CD4-positive, alpha-beta T cell (primary cell): ENCODE measurements at regions of chr16 and their contacts with region 1.

Region 1: DNA sequence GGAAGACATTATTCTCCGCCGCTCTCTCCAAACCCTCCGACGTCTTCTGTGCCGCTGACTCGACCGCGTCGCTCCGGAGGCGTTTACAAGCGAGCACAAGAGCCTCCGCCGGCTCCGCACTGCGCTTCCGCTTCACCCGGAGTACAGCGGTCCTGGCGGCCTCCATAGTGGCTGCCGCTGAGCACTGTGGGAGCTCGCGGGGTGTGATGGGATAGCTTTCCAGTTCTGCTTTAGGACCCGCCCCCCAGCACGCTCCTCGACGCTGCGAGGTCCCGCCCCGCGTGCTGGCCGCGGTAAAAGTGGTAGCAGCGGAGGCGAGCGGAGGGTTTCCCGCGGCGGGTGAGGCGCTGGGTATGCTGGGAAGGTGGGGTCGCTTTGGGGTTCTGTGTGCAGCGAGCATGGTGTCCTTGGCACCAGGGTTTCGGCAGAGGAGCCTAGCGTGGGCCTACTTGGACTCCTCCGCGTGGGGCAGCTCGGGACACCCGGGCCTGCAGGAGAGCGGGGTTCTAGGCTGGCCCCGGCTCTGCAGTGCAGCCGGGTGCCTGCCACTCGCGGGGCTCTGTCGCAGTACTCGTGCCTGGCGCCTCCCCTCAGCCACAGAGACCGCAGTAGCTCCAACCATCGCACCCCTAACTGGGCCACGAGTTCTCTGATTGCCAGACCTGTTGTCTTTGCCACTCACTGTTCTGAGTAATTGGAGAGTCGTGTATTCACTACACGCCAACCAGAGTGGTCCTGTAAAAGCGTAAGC is at the starts of genes PRMT7 and SLC7A6OS:
- DNase-seq: peak; percentile 82 to 97 (median 90)
- ATAC-seq: peak; percentile 98
- H3K4me3 ChIP-seq: peak within 1 kb of the TSS; percentile 100
- H3K4me3 Mint-ChIP-seq: peak within 1 kb of the TSS; percentile 100
- H3K27ac ChIP-seq: peak within 1 kb of the TSS; percentile 73 to 79
- H3K27ac Mint-ChIP-seq: peak within 1 kb of the TSS; percentile 91
- H3K4me1 ChIP-seq: peaks cover 49% of the 10 kb centered on the region
- H3K4me1 Mint-ChIP-seq: peaks cover 62% of the 10 kb centered on the region
- H3K27me3 ChIP-seq: no peaks in the 10 kb centered on the region
- H3K27me3 Mint-ChIP-seq: no peaks in the 10 kb centered on the region
- CTCF ChIP-seq: peak; percentile 14
- total RNA-seq, gene PRMT7: 46.3 to 51.0 TPM
- total RNA-seq, gene SLC7A6OS: 29.0 to 32.1 TPM

Region 2: GRCh38 chr16:68244903-68245853 is 65.8 kb before region 1 on chr16 and contains the start of gene PLA2G15:
- CTCF ChIA-PET with region 1: no interaction called
- POLR2A ChIA-PET with region 1: interaction called, 11 read pairs
- intact Hi-C with region 1: no loop called
- DNase-seq: peak; percentile 94 to 99 (median 96)
- ATAC-seq: peak; percentile 99
- H3K4me3 ChIP-seq: peak within 1 kb of the TSS; percentile 94
- H3K4me3 Mint-ChIP-seq: peak within 1 kb of the TSS; percentile 99
- H3K27ac ChIP-seq: peak within 1 kb of the TSS in 1 of 2 donors; percentile 21
- H3K27ac Mint-ChIP-seq: peak within 1 kb of the TSS; percentile 50
- H3K4me1 ChIP-seq: peaks cover 29% of the 10 kb centered on the region
- H3K4me1 Mint-ChIP-seq: peaks cover 17% of the 10 kb centered on the region
- H3K27me3 ChIP-seq: no peaks in the 10 kb centered on the region
- H3K27me3 Mint-ChIP-seq: no peaks in the 10 kb centered on the region
- CTCF ChIP-seq: no peak
- total RNA-seq, gene PLA2G15: 4.3 to 4.7 TPM

Region 3: GRCh38 chr16:68264128-68265077 is 46.5 kb before region 1 on chr16 and contains the start of gene SLC7A6:
- CTCF ChIA-PET with region 1: interaction called, 39 read pairs
- POLR2A ChIA-PET with region 1: interaction called, 90 read pairs
- intact Hi-C with region 1: loop called (anchors 1 kb)
- DNase-seq: peak; percentile 59 to 94 (median 76)
- ATAC-seq: peak; percentile 69
- H3K4me3 ChIP-seq: peak within 1 kb of the TSS; percentile 74
- H3K4me3 Mint-ChIP-seq: peak within 1 kb of the TSS; percentile 98
- H3K27ac ChIP-seq: peak within 1 kb of the TSS; percentile 96 to 99
- H3K27ac Mint-ChIP-seq: peak within 1 kb of the TSS; percentile 94
- H3K4me1 ChIP-seq: peaks cover 62% of the 10 kb centered on the region
- H3K4me1 Mint-ChIP-seq: peaks cover 62% of the 10 kb centered on the region
- H3K27me3 ChIP-seq: no peaks in the 10 kb centered on the region
- H3K27me3 Mint-ChIP-seq: no peaks in the 10 kb centered on the region
- CTCF ChIP-seq: peak; percentile 63
- total RNA-seq, gene SLC7A6: 187 to 197 TPM

Region 4: GRCh38 chr16:68275611-68276191 is 35.2 kb before region 1 on chr16:
- CTCF ChIA-PET with region 1: interaction called, 5 read pairs
- POLR2A ChIA-PET with region 1: interaction called, 50 read pairs
- intact Hi-C with region 1: loop called in 1 of 2 experiments (anchors 1 kb)
- DNase-seq: peak in 13 of 14 experiments; percentile 36 to 87 (median 55)
- ATAC-seq: peak; percentile 75
- H3K4me3 ChIP-seq: peak overlapping the region; percentile 5
- H3K4me3 Mint-ChIP-seq: peak overlapping the region; percentile 66
- H3K27ac ChIP-seq: peak overlapping the region; percentile 71 to 74
- H3K27ac Mint-ChIP-seq: peak overlapping the region; percentile 94
- H3K4me1 ChIP-seq: peaks cover 93% of the 10 kb centered on the region
- H3K4me1 Mint-ChIP-seq: peaks cover 73% of the 10 kb centered on the region
- H3K27me3 ChIP-seq: no peaks in the 10 kb centered on the region
- H3K27me3 Mint-ChIP-seq: no peaks in the 10 kb centered on the region
- CTCF ChIP-seq: no peak

Region 5: GRCh38 chr16:68289621-68290329 is 21.2 kb before region 1 on chr16:
- CTCF ChIA-PET with region 1: interaction called, 4 read pairs
- POLR2A ChIA-PET with region 1: interaction called, 52 read pairs
- intact Hi-C with region 1: loop called in 1 of 2 experiments (anchors 2 kb)
- DNase-seq: peak in 10 of 14 experiments; percentile 27 to 68 (median 40)
- ATAC-seq: peak; percentile 38
- H3K4me3 ChIP-seq: no peak overlapping the region
- H3K4me3 Mint-ChIP-seq: peak overlapping the region; percentile 70
- H3K27ac ChIP-seq: peak overlapping the region; percentile 74 to 83
- H3K27ac Mint-ChIP-seq: peak overlapping the region; percentile 87
- H3K4me1 ChIP-seq: peaks cover 93% of the 10 kb centered on the region
- H3K4me1 Mint-ChIP-seq: peaks cover 87% of the 10 kb centered on the region
- H3K27me3 ChIP-seq: no peaks in the 10 kb centered on the region
- H3K27me3 Mint-ChIP-seq: no peaks in the 10 kb centered on the region
- CTCF ChIP-seq: no peak

Region 6: GRCh38 chr16:68298907-68299561 is 11.9 kb before region 1 on chr16:
- CTCF ChIA-PET with region 1: interaction called, 4 read pairs
- POLR2A ChIA-PET with region 1: interaction called, 17 read pairs
- intact Hi-C with region 1: no loop called
- DNase-seq: no peak
- ATAC-seq: no peak
- H3K4me3 ChIP-seq: no peak overlapping the region
- H3K4me3 Mint-ChIP-seq: peak overlapping the region; percentile 7
- H3K27ac ChIP-seq: no peak overlapping the region
- H3K27ac Mint-ChIP-seq: peak overlapping the region; percentile 43
- H3K4me1 ChIP-seq: peaks cover 13% of the 10 kb centered on the region
- H3K4me1 Mint-ChIP-seq: peaks cover 51% of the 10 kb centered on the region
- H3K27me3 ChIP-seq: no peaks in the 10 kb centered on the region
- H3K27me3 Mint-ChIP-seq: no peaks in the 10 kb centered on the region
- CTCF ChIP-seq: no peak